Activated CD8-positive, alpha-beta T cell treated with anti-CD3 and anti-CD28 coated beads for 36 hours (primary cell): ENCODE measurements at regions of chr6 and their contacts with region 1.

Region 1: DNA sequence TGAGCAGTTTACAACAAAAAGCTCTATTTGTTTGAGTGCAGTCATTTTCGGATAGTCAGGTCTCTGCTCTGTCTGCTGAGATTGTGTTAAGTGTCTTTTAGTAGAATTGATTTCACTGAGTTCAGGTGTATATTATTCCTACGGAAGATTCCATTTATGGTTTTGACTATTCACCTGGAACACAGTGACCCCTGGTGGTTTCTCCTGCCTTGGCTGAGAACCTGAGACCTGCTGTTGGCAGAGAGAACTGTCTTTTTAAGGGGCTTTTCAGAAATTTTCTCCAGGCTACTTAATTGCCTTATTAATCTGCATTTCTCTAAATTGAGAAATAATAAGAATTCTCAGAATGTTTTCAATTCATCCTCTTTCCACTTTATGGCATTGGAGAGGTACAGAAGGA is 508.0 kb downstream of the TBC1D32 start:
- DNase-seq: peak; percentile 24
- ATAC-seq: no peak
- H3K4me3 Mint-ChIP-seq: no peak overlapping the region
- H3K27ac Mint-ChIP-seq: no peak overlapping the region
- H3K4me1 Mint-ChIP-seq: no peaks in the 10 kb centered on the region
- H3K27me3 Mint-ChIP-seq: no peaks in the 10 kb centered on the region
- CTCF ChIP-seq: peak; percentile 23

Region 2: DNA sequence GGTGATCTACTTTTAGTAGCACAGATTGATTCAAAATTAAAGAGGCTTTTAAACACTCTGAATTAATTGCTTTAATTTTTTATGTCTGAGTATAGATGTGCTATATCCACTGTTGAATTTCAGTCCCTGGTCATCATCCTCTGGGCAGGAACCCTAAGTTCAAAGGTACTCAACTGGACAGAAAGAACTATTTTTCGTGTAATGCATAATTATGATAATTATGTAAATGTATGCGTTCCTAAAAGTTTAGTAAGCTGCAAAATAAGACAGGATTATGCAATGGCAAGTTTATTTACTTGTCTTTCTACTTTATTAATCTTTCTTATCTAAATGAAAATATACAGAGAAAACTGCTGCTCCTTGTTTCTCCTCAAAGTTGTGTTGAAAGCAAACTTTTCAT is 786.6 kb before region 1 on chr6:
- CTCF ChIA-PET with region 1: no interaction called
- POLR2A ChIA-PET with region 1: no interaction called
- intact Hi-C with region 1: loop called (anchors 10 kb)
- DNase-seq: no peak
- ATAC-seq: no peak
- H3K4me3 Mint-ChIP-seq: no peak overlapping the region
- H3K27ac Mint-ChIP-seq: no peak overlapping the region
- H3K4me1 Mint-ChIP-seq: no peaks in the 10 kb centered on the region
- H3K27me3 Mint-ChIP-seq: peaks cover 3% of the 10 kb centered on the region
- CTCF ChIP-seq: no peak